ENCODE measurements at regions of chr11 and their contacts with region 1.

Region 1: GRCh38 chr11:20367313-20367948 is 3.9 kb downstream of the HTATIP2 start:
- DNase-seq: peak; percentile 93
- H3K27ac ChIP-seq: no peak overlapping the region
- CTCF ChIP-seq: no peak

Region 2: DNA sequence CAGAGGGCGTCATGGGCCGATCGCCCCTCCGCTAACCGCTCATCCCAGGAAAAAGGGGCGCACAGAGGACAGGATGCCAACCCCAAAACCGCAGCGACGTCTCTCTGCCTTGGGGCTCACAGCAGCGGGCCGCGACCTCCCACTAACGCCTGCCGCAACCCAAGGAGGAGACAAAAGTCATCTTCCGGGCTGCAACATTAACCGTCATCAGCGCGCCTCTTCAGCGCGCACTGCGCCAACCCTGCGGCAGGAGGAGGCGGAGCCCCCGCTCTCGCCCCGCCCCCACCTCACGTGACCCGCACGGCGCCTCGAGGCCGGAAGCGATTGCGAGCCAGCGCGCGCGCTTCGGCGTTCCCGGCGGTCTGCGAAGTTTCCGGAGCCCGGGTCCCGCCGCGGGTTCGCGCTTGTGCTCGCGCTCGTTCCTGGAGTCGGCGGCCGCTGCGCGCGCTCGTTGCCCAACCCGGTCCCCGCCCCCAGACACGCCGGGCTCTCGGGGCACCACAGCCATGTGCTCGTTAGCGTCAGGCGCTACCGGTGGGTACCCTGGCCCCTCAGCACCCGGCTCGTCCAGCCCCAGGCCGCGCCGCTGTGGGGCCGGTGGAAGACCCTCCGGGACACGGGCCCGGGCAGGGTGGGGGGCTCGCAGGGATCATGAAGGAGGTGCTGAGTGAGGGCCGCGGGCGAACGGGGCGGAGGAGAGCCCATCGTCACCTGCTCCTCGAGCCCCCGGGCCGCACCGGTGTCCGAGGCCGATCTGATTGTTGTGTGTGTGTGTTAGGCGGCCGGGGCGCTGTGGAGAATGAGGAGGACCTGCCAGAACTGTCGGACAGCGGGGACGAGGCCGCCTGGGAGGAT is 20.0 kb after region 1 on chr11 and contains the start of gene PRMT3:
- CTCF ChIA-PET with region 1: interaction called, 11 read pairs
- POLR2A ChIA-PET with region 1: no interaction called
- DNase-seq: peak; percentile 93
- H3K27ac ChIP-seq: peak within 1 kb of the TSS; percentile 87
- CTCF ChIP-seq: peak; percentile 94